ENCODE measurements at regions of chr20 and their contacts with region 1.

Region 1: DNA sequence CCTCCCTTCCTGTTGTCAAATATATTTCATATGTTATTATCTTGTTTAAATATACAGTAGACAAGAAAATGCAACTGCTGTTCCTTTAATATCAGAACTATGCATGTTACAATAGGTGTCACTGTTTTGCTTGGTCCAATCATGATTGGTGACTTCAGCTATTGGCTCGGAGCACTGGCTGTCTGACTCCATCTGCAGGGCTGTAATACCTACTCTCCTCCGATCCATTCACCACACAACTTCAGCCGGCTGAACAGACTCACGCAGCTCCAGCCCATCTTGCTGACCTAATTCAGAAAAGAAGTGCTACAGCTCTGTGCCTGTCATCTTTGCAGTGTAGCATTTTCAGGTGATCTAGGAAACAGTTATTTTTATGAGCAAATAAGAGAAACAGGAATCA is at the start of gene BTBD3:
- DNase-seq: peak; percentile 67 to 78 (median 73)
- ATAC-seq: peak; percentile 94 to 98 (median 96)
- H3K4me3 ChIP-seq: peak within 1 kb of the TSS; percentile 1 to 66 (median 54)
- H3K27ac ChIP-seq: peak within 1 kb of the TSS; percentile 54 to 84 (median 72)
- H3K4me1 ChIP-seq: peaks cover 0 to 76% (median 30%) of the 10 kb centered on the region in 12 donors
- H3K27me3 ChIP-seq: no peaks in the 10 kb centered on the region
- CTCF ChIP-seq: peak in 7 of 12 donors; percentile 6 to 51 (median 31)
- POLR2A ChIP-seq: peak in 1 of 2 donors; percentile 66
- total RNA-seq, gene BTBD3: 18.0 to 33.9 (median 24.3) TPM

Region 2: GRCh38 chr20:11686820-11687543 is 230.7 kb before region 1 on chr20:
- intact Hi-C with region 1: loop called in 1 of 10 experiments (anchors 5 kb)
- DNase-seq: peak in 4 of 5 donors; percentile 15 to 59 (median 29)
- ATAC-seq: peak in 2 of 4 donors; percentile 38 to 67
- H3K4me3 ChIP-seq: peak overlapping the region in 10 of 12 donors; percentile 13 to 47 (median 44)
- H3K27ac ChIP-seq: no peak overlapping the region
- H3K4me1 ChIP-seq: peaks cover 0 to 13% (median 5%) of the 10 kb centered on the region in 12 donors
- H3K27me3 ChIP-seq: peaks cover 0 to 3% (median 0%) of the 10 kb centered on the region in 9 donors
- CTCF ChIP-seq: no peak
- POLR2A ChIP-seq: no peak

Region 3: DNA sequence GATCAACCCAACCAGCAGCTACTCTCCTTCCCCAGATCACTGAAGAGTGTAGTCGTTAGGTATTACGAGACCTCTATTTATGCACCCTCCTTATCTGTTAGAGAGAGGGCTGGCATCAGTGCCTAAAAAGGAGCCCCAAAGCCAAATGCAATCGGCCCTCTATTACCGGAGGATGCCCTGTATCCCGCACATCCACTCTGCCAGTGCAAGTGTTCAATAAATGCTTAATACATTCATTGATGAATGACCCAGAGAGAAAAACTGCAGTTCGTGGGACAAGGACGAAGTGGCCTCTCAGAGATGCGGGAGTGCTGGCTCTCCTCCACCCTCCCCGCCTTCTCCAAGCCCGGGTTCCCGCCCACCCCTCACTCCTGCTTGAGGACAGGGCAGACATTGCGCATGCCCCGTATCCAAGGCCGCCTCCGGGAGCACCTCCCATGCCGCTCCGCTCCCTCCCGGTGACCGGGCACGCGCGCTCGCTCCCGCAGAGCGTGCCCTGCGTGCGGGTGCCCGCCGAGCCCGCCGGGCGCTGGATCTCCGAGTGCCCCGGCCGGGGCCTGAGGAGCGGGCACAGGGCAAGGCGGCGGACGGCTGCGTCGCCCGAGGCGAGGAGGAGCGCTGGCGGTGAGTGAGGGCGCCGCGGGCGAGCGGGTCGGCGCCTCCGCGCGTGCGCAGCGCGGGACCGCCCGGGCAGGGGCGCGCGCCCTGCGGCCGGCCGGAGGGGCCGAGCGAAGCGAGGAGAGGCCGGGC is 27.2 kb before region 1 on chr20:
- intact Hi-C with region 1: loop called in 3 of 10 experiments (anchors 1 to 2 kb)
- DNase-seq: peak; percentile 91 to 95 (median 93)
- ATAC-seq: peak; percentile 97 to 98 (median 98)
- H3K4me3 ChIP-seq: peak overlapping the region; percentile 45 to 88 (median 76)
- H3K27ac ChIP-seq: peak overlapping the region; percentile 84 to 98 (median 93)
- H3K4me1 ChIP-seq: peaks cover 0 to 42% (median 25%) of the 10 kb centered on the region in 12 donors
- H3K27me3 ChIP-seq: no peaks in the 10 kb centered on the region
- CTCF ChIP-seq: no peak
- POLR2A ChIP-seq: peak in 1 of 2 donors; percentile 56

Region 4: DNA sequence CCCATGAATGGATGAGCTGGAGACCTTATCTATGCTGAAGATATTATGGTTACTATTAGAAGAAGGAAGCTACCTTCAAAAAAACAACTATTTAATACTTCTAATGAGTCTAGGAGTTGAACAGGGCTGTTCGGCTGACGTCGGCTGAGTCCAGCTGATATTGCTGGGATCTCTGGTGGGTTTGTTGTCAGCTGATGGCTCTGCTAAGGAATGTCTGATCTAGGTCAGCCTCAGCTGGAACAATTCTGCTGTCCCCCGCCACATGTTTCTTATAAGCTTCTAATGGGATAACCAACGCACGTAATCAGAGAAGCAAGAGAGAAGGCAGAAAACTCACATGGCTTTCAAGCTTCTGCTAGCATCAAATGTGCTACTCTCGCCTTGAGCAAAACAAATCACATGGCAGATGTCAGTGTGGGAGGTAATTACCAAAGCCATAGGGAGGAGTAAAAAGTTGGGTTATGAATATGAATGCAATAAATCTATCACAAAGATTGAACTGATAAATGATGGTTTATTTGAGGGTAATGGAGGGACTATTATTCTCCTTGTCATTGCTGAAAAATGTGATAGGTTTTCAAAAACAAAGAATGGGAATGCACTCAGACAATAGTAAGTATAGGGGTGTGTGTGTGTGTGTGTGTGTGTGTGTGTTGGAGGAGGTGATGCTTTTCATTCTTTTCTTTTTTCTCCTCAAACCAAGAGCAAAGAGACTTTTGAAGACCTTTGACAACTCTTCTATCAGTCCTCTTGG is 71.5 kb after region 1 on chr20:
- intact Hi-C with region 1: loop called in 1 of 10 experiments (anchors 5 kb)
- DNase-seq: no peak
- ATAC-seq: peak in 2 of 4 donors; percentile 50 to 66
- H3K4me3 ChIP-seq: no peak overlapping the region
- H3K27ac ChIP-seq: no peak overlapping the region
- H3K4me1 ChIP-seq: peaks cover 0 to 13% (median 0%) of the 10 kb centered on the region in 12 donors
- H3K27me3 ChIP-seq: no peaks in the 10 kb centered on the region
- CTCF ChIP-seq: no peak
- POLR2A ChIP-seq: no peak

Region 5: GRCh38 chr20:12171923-12172534 is 254.4 kb after region 1 on chr20:
- intact Hi-C with region 1: loop called in 1 of 10 experiments (anchors 10 kb)
- DNase-seq: peak in 2 of 5 donors; percentile 13 to 26
- ATAC-seq: peak; percentile 80 to 97 (median 94)
- H3K4me3 ChIP-seq: no peak overlapping the region
- H3K27ac ChIP-seq: peak overlapping the region in 9 of 12 donors; percentile 1 to 63 (median 36)
- H3K4me1 ChIP-seq: peaks cover 0 to 26% (median 13%) of the 10 kb centered on the region in 12 donors
- H3K27me3 ChIP-seq: no peaks in the 10 kb centered on the region
- CTCF ChIP-seq: no peak
- POLR2A ChIP-seq: no peak

Region 6: GRCh38 chr20:12207875-12208274 is 290.2 kb after region 1 on chr20:
- intact Hi-C with region 1: loop called in 1 of 10 experiments (anchors 10 kb)
- DNase-seq: no peak
- ATAC-seq: peak in 1 of 4 donors; percentile 46
- H3K4me3 ChIP-seq: no peak overlapping the region
- H3K27ac ChIP-seq: no peak overlapping the region
- H3K4me1 ChIP-seq: no peaks in the 10 kb centered on the region
- H3K27me3 ChIP-seq: no peaks in the 10 kb centered on the region
- CTCF ChIP-seq: peak; percentile 27 to 71 (median 52)
- POLR2A ChIP-seq: no peak

Measured in heart left ventricle (tissue), 16 donors.